Activated CD4-positive, alpha-beta memory T cell treated with anti-CD3 and anti-CD28 coated beads, Interleukin-2, amount 10 ng/mL, durations not matched to agents 7 days and 5 days (primary cell): ENCODE measurements at regions of chr13 and their contacts with region 1.

Region 1: DNA sequence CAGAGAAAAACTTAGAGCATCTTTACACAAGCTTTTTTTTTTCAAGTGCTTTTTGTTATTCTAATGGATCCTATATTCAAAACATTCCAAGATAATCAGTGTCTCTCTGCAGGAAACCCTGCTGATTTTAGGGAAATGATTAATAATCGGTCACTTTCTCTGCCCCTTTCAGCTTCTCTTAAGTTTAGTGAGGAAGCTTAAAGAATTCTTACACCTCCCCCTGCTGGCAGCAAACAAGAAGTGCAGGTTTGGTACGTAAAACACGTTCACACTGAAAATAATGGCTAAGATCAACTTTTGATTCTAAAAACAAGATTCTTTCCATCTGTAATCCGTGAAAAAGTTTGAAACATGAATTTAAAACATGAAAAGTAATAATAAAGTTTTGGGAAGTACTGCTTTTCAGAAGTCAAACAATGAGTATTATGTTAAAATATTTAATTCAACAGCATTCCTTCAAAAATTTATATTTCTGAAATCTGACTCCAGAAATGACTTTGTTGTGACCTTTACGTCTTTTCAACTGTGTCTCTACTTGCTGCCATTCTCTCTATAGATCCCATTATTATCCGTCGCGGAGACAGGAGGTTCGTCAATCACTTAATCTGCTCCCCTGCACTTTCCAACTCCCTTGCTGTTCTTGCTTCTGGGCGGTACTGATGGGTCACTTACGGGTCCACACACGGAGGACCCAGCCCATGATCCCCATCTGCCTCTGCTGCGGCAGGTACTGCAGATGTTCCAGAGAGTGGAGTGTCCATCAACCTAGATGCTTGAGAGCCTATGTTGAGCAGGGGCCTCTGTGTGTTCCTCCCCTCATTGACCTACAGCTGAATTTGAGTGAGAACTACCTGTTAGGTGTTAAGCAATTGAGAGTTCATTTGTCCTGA is 203.1 kb upstream of the EDNRB start:
- DNase-seq: peak; percentile 29
- H3K4me3 Mint-ChIP-seq: no peak overlapping the region
- H3K27ac Mint-ChIP-seq: no peak overlapping the region
- H3K4me1 Mint-ChIP-seq: peaks cover 3% of the 10 kb centered on the region
- H3K27me3 Mint-ChIP-seq: peaks cover 2% of the 10 kb centered on the region

Region 2: DNA sequence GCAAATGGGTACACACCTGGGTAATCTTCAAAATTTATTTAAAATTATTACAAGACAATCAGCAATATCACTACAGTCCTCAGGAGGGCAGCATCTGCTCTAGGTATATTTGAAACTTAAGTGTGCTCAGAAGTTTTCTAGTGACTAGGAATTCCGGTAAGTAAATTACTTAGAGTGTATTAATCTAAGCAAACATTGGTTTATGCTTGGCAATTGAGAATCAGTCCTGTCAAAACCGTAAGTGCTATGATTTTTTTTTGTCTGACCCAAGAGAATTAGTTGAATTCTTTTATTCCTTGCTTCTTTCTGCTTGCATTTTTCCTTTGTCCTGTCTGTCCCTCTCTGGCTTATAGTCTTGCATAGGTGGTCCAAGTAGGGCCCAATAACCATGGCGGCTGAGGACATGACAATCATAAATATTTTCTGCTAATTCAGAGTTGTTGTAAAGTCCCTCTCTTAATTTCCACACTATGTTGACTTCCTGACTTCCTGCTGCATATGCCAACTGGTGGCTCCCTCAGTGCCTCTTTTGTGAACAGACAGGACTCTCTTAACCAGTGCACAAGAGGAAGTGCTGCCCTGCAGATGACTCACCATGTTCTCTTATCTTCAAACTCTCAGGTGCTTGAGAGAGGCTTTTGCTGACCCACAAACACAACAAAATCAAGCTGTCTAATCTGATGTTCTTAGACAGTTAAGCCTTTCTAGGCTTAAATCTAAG is 342.0 kb before region 1 on chr13:
- CTCF ChIA-PET with region 1: interaction called, 13 read pairs
- POLR2A ChIA-PET with region 1: no interaction called
- DNase-seq: peak; percentile 35
- H3K4me3 Mint-ChIP-seq: no peak overlapping the region
- H3K27ac Mint-ChIP-seq: peak overlapping the region; percentile 9
- H3K4me1 Mint-ChIP-seq: peaks cover 13% of the 10 kb centered on the region
- H3K27me3 Mint-ChIP-seq: no peaks in the 10 kb centered on the region

Region 3: GRCh38 chr13:77810430-77810829 is 311.3 kb before region 1 on chr13:
- CTCF ChIA-PET with region 1: interaction called, 10 read pairs
- POLR2A ChIA-PET with region 1: no interaction called
- DNase-seq: no peak
- H3K4me3 Mint-ChIP-seq: no peak overlapping the region
- H3K27ac Mint-ChIP-seq: no peak overlapping the region
- H3K4me1 Mint-ChIP-seq: no peaks in the 10 kb centered on the region
- H3K27me3 Mint-ChIP-seq: peaks cover 11% of the 10 kb centered on the region